ENCODE measurements at regions of chr14 and their contacts with region 1.

Region 1: DNA sequence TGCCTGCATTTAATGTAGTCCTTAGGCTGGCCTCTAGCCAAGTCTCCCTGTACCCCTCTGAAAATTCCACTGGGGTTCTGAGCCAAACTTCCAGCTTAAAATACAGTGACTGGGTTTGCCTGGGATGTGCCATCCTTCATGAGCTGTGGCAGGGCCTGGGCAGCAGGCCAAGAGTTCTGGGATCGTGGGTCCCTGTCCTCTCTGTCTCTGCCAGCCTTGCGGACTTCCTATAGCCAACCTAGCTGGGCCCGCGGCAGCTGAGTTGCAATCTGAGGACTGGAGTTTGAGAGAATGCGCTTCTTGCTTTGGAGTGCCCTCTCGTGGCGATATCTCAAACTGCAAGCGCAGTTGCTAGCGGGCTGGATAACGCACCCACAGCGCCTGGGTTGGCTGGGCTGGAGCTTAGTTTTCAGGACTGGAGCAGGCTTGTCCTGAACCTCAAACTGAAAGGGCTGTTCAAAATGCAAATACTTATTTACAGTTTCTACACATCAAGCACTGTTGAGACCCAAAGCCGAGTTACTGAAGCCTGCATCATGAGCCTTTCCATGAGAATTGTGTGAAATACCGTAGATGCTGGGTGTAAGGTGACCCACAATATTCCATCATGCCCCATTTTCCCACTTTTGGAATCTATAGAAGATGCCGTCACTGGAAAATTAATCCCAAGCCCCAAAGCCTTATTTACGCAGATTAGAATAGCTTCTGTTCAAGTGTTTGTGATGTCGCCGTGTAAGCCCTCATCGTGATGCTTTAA is 7.3 kb upstream of the IFI27L2 start:
- DNase-seq: peak; percentile 91
- ATAC-seq: peak; percentile 87
- H3K4me3 Mint-ChIP-seq: no peak overlapping the region
- H3K27ac Mint-ChIP-seq: no peak overlapping the region
- H3K4me1 Mint-ChIP-seq: peaks cover 5% of the 10 kb centered on the region
- H3K27me3 Mint-ChIP-seq: peaks cover 29% of the 10 kb centered on the region

Region 2: GRCh38 chr14:94026173-94026888 is 110.4 kb before region 1 on chr14 and contains the start of gene OTUB2:
- CTCF ChIA-PET with region 1: interaction called, 13 read pairs
- DNase-seq: peak; percentile 99
- ATAC-seq: peak; percentile 98
- H3K4me3 Mint-ChIP-seq: peak within 1 kb of the TSS; percentile 64
- H3K27ac Mint-ChIP-seq: peak within 1 kb of the TSS; percentile 65
- H3K4me1 Mint-ChIP-seq: peaks cover 56% of the 10 kb centered on the region
- H3K27me3 Mint-ChIP-seq: no peaks in the 10 kb centered on the region
- total RNA-seq, gene OTUB2: 3.4 to 4.2 TPM

Region 3: GRCh38 chr14:94056579-94057308 is 80.0 kb before region 1 on chr14:
- CTCF ChIA-PET with region 1: interaction called, 41 read pairs
- DNase-seq: peak; percentile 80
- ATAC-seq: peak; percentile 84
- H3K4me3 Mint-ChIP-seq: peak overlapping the region; percentile 10
- H3K27ac Mint-ChIP-seq: peak overlapping the region; percentile 72
- H3K4me1 Mint-ChIP-seq: peaks cover 66% of the 10 kb centered on the region
- H3K27me3 Mint-ChIP-seq: no peaks in the 10 kb centered on the region

Region 4: DNA sequence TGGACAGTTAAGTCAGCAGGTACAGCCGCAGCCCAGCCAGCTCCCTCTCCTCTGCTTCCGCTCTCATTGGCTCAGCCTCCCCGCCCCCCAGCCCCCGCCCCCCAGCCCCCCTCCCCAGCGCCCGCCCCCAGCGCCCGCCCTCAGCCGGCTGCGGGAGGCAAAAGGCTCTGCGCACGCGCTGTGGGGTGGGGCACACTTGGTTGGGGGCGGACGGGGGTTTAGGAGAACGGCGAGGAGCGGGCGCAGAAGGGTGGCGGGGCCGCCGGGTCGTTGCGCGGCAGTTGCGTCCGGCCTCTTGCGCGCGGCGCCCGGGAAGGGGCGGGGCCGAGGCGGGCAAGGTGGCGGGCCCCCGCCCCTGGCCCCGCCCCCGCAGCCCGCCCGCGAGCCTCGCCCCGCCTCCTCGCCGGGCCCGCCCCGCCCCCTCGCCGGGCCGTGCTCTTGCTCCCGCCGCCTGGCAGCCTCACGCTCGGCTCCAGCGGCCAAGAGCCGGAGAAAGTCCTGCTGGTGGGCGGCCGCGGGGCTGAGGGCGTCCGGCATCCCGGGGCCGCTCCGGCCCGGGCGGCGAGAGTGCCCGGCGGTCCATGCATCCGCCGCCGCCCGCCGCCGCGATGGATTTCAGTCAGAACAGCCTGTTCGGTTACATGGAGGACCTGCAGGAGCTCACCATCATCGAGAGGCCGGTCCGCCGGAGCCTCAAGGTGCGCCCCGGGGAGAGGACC is 37.3 kb after region 1 on chr14 and contains the start of gene PPP4R4:
- CTCF ChIA-PET with region 1: interaction called, 53 read pairs
- DNase-seq: peak; percentile 91
- ATAC-seq: peak; percentile 93
- H3K4me3 Mint-ChIP-seq: peak within 1 kb of the TSS; percentile 66
- H3K27ac Mint-ChIP-seq: peak within 1 kb of the TSS; percentile 56
- H3K4me1 Mint-ChIP-seq: peaks cover 17% of the 10 kb centered on the region
- H3K27me3 Mint-ChIP-seq: peaks cover 58% of the 10 kb centered on the region
- total RNA-seq, gene PPP4R4: 0.64 to 0.68 TPM

Measured in activated CD8-positive, alpha-beta memory T cell treated with anti-CD3 and anti-CD28 coated beads, Interleukin-2, amount 10 ng/mL, durations not matched to agents 7 days and 5 days (primary cell).